ENCODE measurements at regions of chr19 and their contacts with region 1.

Region 1: DNA sequence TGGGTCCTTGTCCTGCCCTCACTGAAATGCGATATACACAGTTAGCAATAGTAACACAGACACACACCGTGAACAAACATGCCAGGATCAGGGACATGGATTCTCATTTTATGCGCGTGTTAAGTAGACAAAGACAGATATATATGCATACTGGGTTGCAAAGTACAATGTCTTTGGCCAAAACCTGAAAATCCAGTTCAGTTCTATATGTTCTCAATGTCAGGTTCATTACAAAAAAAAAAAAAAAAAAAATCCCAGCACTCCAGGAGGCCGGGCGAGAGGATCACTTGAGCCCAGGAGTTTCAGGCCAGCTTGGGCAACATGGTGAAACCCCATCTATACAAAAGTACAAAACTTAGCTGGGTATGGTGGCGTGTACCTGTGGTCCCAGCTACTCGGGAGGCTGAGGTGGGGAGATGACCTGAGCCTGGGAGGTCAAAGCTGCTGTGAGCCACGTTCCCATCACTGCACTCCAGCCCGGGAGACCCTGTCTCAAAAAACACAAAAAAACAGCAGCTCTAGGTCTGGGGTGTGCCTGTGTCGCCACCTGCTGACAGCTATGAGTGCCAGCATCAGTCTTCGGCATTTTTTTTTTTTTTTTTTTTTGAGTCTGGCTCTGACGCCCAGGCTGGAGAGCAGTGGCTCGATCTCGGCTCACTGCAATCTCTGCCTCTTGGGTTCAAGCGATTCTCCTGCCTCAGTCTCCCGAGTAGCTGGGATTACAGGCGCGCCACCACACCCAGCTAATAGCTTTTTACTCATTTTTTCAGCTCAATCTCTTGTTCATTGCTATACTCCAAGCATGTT is 10.3 kb downstream of the AP2S1 start:
- H3K4me3 ChIP-seq: no peak overlapping the region
- H3K27ac ChIP-seq: no peak overlapping the region
- H3K4me1 ChIP-seq: peaks cover 7% of the 10 kb centered on the region
- CTCF ChIP-seq: peak; percentile 90

Region 2: GRCh38 chr19:46753420-46754155 is 86.8 kb before region 1 on chr19:
- CTCF ChIA-PET with region 1: interaction called, 83 read pairs
- POLR2A ChIA-PET with region 1: interaction called, 9 read pairs
- H3K4me3 ChIP-seq: no peak overlapping the region
- H3K27ac ChIP-seq: no peak overlapping the region
- H3K4me1 ChIP-seq: no peaks in the 10 kb centered on the region
- CTCF ChIP-seq: peak; percentile 57

Region 3: GRCh38 chr19:46766569-46767317 is 73.6 kb before region 1 on chr19:
- CTCF ChIA-PET with region 1: interaction called, 24 read pairs
- POLR2A ChIA-PET with region 1: interaction called, 4 read pairs
- H3K4me3 ChIP-seq: no peak overlapping the region
- H3K27ac ChIP-seq: no peak overlapping the region
- H3K4me1 ChIP-seq: peaks cover 12% of the 10 kb centered on the region
- CTCF ChIP-seq: peak; percentile 90

Region 4: GRCh38 chr19:46788262-46788967 is 51.9 kb before region 1 on chr19 and contains the start of gene SLC1A5:
- CTCF ChIA-PET with region 1: interaction called, 26 read pairs
- POLR2A ChIA-PET with region 1: interaction called, 50 read pairs
- H3K4me3 ChIP-seq: peak within 1 kb of the TSS; percentile 57
- H3K27ac ChIP-seq: peak within 1 kb of the TSS; percentile 96
- H3K4me1 ChIP-seq: peaks cover 24% of the 10 kb centered on the region
- CTCF ChIP-seq: no peak; the same call in 1 of the 2 replicates

Region 5: DNA sequence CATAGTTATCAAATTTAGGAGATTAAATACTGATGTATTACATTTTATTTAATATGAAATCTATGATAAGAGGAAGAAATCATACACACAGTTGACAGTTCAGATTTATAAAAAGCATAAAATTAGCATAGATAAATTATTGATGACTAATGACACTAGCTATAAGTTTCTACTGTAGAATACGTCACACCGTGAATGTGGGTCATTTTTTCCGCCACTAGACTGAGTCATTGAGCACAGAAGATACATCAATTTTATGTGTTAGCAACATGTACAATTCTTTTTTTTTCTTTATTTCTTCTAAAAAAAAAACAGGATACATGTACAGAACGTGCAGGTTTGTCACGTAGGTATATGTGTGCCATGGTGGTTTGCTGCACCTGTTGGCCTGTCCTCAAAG is 11.9 kb before region 1 on chr19:
- CTCF ChIA-PET with region 1: interaction called, 29 read pairs
- POLR2A ChIA-PET with region 1: interaction called, 6 read pairs
- H3K4me3 ChIP-seq: no peak overlapping the region
- H3K27ac ChIP-seq: no peak overlapping the region
- H3K4me1 ChIP-seq: peaks cover 3% of the 10 kb centered on the region
- CTCF ChIP-seq: no peak

Region 6: DNA sequence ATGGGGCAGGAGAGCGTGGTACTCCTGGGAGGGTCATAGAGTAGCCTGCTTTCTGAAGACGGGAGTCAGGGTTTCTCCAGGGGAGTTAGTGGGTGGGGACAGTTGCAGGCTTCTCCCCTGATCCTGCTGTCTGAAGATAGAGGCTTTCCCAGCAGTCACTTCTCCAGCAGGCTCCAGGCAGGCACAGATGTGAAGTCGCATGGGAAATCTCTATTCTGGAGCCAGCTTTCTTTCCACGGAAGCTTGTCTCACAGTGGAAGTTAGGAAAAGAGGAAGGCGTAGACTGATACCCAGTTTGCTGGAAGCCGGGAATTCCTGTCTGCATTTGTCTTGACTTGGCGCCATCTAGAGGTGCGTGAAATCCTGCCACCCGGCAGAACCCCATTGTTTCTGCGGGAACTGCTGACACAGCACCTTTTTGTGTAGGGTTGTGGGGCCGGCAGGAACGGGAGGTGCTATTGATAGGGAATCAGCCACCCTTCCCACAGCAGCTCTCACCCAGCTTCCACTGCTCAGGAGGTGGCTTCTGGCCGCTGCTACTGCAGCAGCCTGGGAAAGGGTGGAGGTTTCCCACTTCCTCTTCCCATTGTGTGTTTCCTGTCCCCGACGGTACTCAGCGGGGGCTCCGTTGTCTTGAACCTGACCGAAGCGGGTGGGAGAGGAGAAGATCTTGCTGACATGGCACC is 150.8 kb after region 1 on chr19:
- CTCF ChIA-PET with region 1: interaction called, 20 read pairs
- POLR2A ChIA-PET with region 1: interaction called, 3 read pairs
- H3K4me3 ChIP-seq: no peak overlapping the region
- H3K27ac ChIP-seq: no peak overlapping the region
- H3K4me1 ChIP-seq: no peaks in the 10 kb centered on the region
- CTCF ChIP-seq: peak; percentile 84